RWPE1 (cell line): ENCODE measurements at regions of chr15 and their contacts with region 1.

Region 1: DNA sequence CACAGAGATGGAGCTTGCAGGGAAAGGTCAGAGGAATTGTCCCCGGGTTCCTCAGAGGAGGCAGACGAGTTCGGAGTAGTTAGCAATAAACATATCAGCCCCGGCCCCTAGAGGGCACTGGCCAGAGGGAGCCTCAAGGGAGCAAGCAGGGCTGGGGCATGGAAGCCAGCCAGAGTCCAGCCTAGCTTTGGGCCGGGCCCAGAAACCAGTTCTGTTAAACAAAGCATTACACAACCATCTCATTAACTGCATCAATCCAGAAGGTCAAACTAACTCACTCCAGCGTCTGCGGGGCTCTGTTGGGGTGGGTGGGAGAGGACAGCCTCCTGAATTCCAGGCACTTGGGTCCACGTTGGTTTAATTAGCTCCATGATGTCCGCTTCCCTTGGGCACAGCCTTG is 41.0 kb upstream of the IREB2 start:
- DNase-seq: no peak
- H3K27ac ChIP-seq: no peak overlapping the region
- CTCF ChIP-seq: no peak

Region 2: DNA sequence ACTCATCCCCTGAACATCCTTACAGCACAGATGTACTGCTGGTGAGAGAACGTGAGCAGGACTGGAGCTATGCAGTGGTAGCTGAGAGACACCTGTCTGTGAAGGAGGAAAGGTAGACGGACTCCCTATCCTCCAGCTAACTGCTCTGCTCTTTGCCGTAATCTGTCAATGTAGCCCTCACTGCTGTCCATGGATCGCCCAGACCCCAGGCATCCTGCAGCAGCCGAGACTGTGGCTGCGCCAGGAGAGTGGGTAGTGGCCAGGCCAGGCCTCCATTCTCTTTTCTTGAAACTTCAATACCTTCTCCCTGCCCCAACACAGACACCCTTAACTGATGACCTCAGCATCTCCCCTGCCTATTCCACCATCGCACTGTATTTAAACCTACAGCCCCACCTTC is 12.3 kb before region 1 on chr15:
- CTCF ChIA-PET with region 1: interaction called, 10 read pairs
- POLR2A ChIA-PET with region 1: no interaction called
- DNase-seq: no peak
- H3K27ac ChIP-seq: no peak overlapping the region
- CTCF ChIP-seq: no peak

Region 3: GRCh38 chr15:78415286-78415685 is 18.3 kb after region 1 on chr15:
- CTCF ChIA-PET with region 1: interaction called, 11 read pairs
- POLR2A ChIA-PET with region 1: no interaction called
- DNase-seq: peak; percentile 43
- H3K27ac ChIP-seq: no peak overlapping the region
- CTCF ChIP-seq: peak; percentile 26

Region 4: GRCh38 chr15:78427953-78428352 is 31.0 kb after region 1 on chr15:
- CTCF ChIA-PET with region 1: interaction called, 10 read pairs
- POLR2A ChIA-PET with region 1: no interaction called
- DNase-seq: no peak
- H3K27ac ChIP-seq: no peak overlapping the region
- CTCF ChIP-seq: no peak